HepG2 (cell line): ENCODE measurements at regions of chr9 and their contacts with region 1.

Region 1: DNA sequence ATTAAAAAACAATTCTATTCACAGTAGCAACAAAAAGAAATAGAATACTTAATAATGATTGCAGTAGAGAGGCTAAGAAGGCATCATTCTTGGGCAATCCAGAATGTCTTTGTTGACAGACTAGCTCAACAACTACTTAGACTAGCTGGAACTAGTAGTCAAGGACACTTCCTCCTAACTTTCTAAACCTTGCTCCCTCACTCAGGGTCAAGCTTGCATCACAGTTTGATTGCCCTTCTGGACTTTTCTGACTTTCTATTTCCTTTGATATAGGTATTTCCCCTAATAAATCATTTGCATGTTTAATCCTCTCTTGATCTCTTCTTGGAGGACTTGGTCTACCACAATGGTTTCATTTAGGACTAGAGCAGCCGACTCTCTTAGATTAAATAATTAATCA is 1107.9 kb downstream of the PTPRD start:
- DNase-seq: no peak
- ATAC-seq: no peak
- H3K4me3 ChIP-seq: no peak overlapping the region
- H3K27ac ChIP-seq: no peak overlapping the region
- H3K4me1 ChIP-seq: no peaks in the 10 kb centered on the region
- H3K27me3 ChIP-seq: no peaks in the 10 kb centered on the region
- CTCF ChIP-seq: no peak
- EP300 ChIP-seq: no peak
- POLR2A ChIP-seq: no peak
- RAD21 ChIP-seq: no peak

Region 2: GRCh38 chr9:8206720-8207119 is 1298.1 kb before region 1 on chr9:
- CTCF ChIA-PET with region 1: no interaction called
- POLR2A ChIA-PET with region 1: no interaction called
- in situ Hi-C with region 1: no loop called
- intact Hi-C with region 1: loop called (anchors 10 kb)
- DNase-seq: no peak
- ATAC-seq: no peak
- H3K4me3 ChIP-seq: no peak overlapping the region
- H3K27ac ChIP-seq: no peak overlapping the region
- H3K4me1 ChIP-seq: no peaks in the 10 kb centered on the region
- H3K27me3 ChIP-seq: no peaks in the 10 kb centered on the region
- CTCF ChIP-seq: no peak
- EP300 ChIP-seq: no peak
- POLR2A ChIP-seq: no peak
- RAD21 ChIP-seq: no peak